ENCODE measurements at regions of chr1 and their contacts with region 1.

Region 1: DNA sequence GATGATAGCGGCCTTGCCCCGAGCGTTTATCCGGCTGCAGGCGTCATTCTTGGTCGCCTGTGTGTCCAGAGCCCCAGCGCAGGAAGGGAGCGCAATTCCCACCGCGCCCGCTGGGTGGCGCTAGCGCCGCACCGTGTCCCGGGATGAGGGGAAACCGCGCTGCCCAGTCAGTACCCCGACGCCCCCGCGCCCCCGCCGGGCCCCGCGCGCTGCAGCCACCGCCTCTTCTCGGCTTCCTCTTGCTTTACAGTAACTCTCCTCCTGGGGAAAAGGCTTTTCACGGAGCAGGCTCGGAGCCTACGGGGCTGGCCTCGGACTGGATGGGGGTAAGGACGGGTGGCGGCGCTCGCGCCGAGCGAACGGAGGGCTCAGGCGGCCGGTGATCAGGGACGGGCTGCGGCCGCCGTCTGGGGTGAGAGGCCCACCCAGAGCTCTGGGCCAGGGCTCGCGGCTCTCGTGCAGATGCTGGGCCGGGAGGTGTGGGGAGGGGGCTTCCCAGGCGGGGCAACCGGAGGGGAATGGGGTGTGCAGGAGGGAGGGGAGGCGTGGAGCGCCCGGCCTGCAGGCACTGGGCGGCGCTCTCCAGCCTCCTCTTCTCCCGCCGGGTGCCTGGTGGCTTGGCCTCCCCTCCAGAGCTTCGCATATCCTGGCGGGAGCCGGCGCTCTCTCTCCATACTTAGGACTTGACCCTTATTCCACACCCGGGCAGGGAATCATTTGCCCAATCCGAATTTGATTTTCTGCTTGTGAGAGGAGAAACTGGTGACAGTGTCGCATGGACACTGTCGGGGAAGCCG is 29.8 kb downstream of the TEX35 start:
- DNase-seq: peak; percentile 94

Region 2: GRCh38 chr1:178725603-178726517 is 183.1 kb after region 1 on chr1:
- intact Hi-C with region 1: loop called (anchors 10 kb)
- DNase-seq: peak; percentile 88

Region 3: GRCh38 chr1:178752891-178753290 is 210.1 kb after region 1 on chr1:
- intact Hi-C with region 1: loop called (anchors 1 kb)
- DNase-seq: no peak

Region 4: GRCh38 chr1:179002552-179003345 is 460.0 kb after region 1 on chr1:
- intact Hi-C with region 1: loop called (anchors 2 kb)
- DNase-seq: no peak